GM10248 (cell line): ENCODE measurements at regions of chr2 and their contacts with region 1.

Region 1: GRCh38 chr2:20225294-20226151 is 593 bp upstream of the SDC1 start:
- DNase-seq: peak; percentile 84
- CTCF ChIP-seq: peak; percentile 93

Region 2: GRCh38 chr2:20097879-20098714 is 127.4 kb before region 1 on chr2:
- CTCF ChIA-PET with region 1: interaction called, 14 read pairs
- POLR2A ChIA-PET with region 1: no interaction called
- DNase-seq: peak; percentile 86
- CTCF ChIP-seq: peak; percentile 80

Region 3: GRCh38 chr2:20115901-20116300 is 109.6 kb before region 1 on chr2:
- CTCF ChIA-PET with region 1: interaction called, 11 read pairs
- POLR2A ChIA-PET with region 1: no interaction called
- DNase-seq: no peak
- CTCF ChIP-seq: no peak

Region 4: GRCh38 chr2:20135631-20136050 is 89.9 kb before region 1 on chr2:
- CTCF ChIA-PET with region 1: interaction called, 128 read pairs
- POLR2A ChIA-PET with region 1: no interaction called
- DNase-seq: peak; percentile 83
- CTCF ChIP-seq: peak; percentile 94

Region 5: GRCh38 chr2:20186078-20186854 is 39.3 kb before region 1 on chr2:
- CTCF ChIA-PET with region 1: interaction called, 10 read pairs
- POLR2A ChIA-PET with region 1: no interaction called
- DNase-seq: peak; percentile 51
- CTCF ChIP-seq: no peak

Region 6: DNA sequence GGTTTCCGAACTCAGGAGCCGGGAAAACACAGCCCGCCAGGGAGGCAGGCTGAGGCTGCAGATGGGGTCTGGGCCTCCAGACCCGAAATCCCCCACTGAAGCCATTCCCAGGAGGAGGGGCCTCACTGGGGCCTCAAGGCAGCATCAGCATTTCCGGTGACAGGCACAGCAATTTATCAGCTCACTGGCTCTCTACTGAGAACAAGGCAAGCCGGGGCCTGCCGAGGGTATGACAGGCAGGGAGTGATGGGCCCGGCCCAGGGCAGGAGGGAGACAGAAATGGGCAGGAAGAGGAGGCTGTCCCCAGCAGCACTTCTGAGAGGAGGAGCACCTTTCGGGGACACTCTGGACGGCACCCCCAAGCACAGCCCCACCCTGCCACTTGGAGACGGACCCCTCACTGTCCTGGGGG is 13.1 kb before region 1 on chr2:
- CTCF ChIA-PET with region 1: interaction called, 33 read pairs
- POLR2A ChIA-PET with region 1: no interaction called
- DNase-seq: no peak
- CTCF ChIP-seq: no peak

Region 7: GRCh38 chr2:20578895-20579825 is 353.6 kb after region 1 on chr2:
- CTCF ChIA-PET with region 1: no interaction called
- POLR2A ChIA-PET with region 1: no interaction called
- DNase-seq: peak; percentile 75
- CTCF ChIP-seq: no peak